Activated CD4-positive, alpha-beta T cell treated with anti-CD3 and anti-CD28 coated beads for 36 hours (primary cell): ENCODE measurements at regions of chr1 and their contacts with region 1.

Region 1: DNA sequence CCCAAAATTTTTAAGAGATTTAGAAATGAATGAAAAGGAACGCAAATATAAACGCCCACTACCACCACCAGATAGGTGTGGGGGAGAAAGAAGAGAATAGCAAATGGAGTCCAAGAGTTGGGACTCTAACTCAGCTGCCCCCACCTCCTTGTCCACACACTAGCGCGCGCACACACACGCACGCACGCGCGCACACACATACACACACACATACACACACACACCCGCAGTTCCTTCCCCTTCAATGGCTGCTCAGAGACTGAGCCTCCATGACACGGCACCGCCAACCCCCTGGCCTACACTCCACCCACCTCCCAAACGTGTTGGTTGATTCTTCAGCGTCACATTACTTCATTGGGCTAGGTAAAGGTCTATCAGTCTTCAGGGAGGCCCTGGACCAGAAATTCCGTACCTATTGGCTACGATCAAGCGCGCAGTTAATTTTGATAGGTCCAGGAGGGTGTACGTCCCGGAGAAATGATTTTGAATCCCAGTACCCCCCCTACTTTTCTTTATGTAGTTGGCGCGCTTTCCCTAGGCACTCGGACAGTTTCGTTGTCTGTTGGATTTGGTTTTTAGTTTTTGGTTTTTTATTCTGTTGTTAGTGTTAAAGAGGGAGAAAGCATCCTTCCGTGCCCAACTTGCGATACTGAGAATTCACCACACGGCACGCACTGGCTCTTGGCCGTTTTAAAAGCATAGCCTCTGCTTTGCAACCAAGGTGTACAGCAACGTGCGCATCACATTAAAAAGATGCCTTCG is at the start of gene ANP32E:
- DNase-seq: peak; percentile 96
- ATAC-seq: peak; percentile 91
- H3K4me3 Mint-ChIP-seq: no peak within 1 kb of the TSS
- H3K27ac Mint-ChIP-seq: peak within 1 kb of the TSS; percentile 99
- H3K4me1 Mint-ChIP-seq: peaks cover 14% of the 10 kb centered on the region
- H3K27me3 Mint-ChIP-seq: no peaks in the 10 kb centered on the region
- total RNA-seq, gene ANP32E: 176 to 212 TPM

Region 2: GRCh38 chr1:149917571-149918144 is 318.4 kb before region 1 on chr1 and contains the start of gene SV2A:
- CTCF ChIA-PET with region 1: no interaction called
- POLR2A ChIA-PET with region 1: no interaction called
- intact Hi-C with region 1: no loop called
- DNase-seq: peak; percentile 71
- ATAC-seq: peak; percentile 85
- H3K4me3 Mint-ChIP-seq: peak within 1 kb of the TSS; percentile 78
- H3K27ac Mint-ChIP-seq: no peak within 1 kb of the TSS
- H3K4me1 Mint-ChIP-seq: peaks cover 19% of the 10 kb centered on the region
- H3K27me3 Mint-ChIP-seq: peaks cover 2% of the 10 kb centered on the region
- total RNA-seq, gene SV2A: 7.8 to 8.5 TPM

Region 3: DNA sequence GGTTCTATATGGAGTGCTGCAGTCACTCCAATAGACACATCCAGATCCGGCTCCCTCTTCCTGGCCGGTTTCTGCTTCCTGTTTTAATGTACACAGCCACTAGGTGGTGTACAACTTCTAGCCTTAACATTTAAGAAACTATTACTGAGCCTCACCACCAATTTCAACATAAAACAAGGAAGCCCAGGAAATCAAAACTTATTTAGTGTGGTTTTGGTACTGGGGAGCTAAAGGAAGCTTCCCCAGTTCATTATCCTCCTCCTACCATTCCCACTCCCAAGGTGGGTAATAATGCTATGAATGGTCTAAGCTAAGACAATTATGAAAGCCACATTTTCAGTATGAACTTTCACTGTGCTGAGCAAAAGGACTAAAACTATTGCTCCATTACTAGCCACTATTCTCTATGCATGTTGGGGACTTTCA is 273.9 kb before region 1 on chr1:
- CTCF ChIA-PET with region 1: no interaction called
- POLR2A ChIA-PET with region 1: no interaction called
- intact Hi-C with region 1: no loop called
- DNase-seq: peak; percentile 52
- ATAC-seq: peak; percentile 71
- H3K4me3 Mint-ChIP-seq: no peak overlapping the region
- H3K27ac Mint-ChIP-seq: no peak overlapping the region
- H3K4me1 Mint-ChIP-seq: peaks cover 13% of the 10 kb centered on the region
- H3K27me3 Mint-ChIP-seq: no peaks in the 10 kb centered on the region

Region 4: DNA sequence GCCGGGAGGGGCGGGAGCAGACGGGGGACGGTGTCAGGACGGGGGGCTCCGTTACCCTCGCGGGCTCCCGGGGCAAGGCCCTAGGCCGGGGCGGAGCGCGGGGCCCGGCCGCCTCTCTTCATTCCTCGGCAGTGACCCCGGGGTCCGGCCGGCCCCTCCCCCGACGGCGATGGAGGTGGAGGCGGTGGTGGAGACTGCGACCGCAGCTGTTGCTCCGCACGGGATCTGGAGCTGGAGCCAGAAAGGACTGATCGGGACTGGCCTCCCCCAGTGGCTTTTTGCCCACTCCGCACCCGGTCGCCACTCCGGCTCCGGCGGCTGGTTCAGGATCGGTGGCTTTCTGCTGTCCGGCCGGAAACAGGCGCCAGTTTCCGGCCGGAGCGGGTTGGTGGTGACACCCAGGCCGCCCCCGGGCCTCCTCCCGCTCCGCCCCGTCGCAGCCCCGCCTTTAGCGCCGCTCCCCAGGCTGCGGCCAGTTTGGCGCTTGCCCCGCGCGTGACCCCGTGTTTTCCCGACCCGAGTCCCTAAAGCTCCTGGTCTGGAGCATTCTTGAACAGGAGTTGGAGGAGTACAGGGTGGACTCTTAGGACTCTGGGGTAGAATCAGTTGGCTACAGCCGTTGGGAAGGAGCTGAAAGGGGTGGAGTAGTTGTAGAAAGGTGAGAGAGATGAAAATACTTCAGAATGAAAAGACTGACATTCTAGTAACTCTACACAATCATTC is 225.5 kb before region 1 on chr1 and contains the start of gene OTUD7B:
- CTCF ChIA-PET with region 1: no interaction called
- POLR2A ChIA-PET with region 1: no interaction called
- intact Hi-C with region 1: loop called in 1 of 2 experiments (anchors 2 kb)
- DNase-seq: peak; percentile 88
- ATAC-seq: peak; percentile 62
- H3K4me3 Mint-ChIP-seq: peak within 1 kb of the TSS; percentile 99
- H3K27ac Mint-ChIP-seq: peak within 1 kb of the TSS; percentile 99
- H3K4me1 Mint-ChIP-seq: peaks cover 37% of the 10 kb centered on the region
- H3K27me3 Mint-ChIP-seq: no peaks in the 10 kb centered on the region
- total RNA-seq, gene OTUD7B: 18.5 to 20.1 TPM

Region 5: DNA sequence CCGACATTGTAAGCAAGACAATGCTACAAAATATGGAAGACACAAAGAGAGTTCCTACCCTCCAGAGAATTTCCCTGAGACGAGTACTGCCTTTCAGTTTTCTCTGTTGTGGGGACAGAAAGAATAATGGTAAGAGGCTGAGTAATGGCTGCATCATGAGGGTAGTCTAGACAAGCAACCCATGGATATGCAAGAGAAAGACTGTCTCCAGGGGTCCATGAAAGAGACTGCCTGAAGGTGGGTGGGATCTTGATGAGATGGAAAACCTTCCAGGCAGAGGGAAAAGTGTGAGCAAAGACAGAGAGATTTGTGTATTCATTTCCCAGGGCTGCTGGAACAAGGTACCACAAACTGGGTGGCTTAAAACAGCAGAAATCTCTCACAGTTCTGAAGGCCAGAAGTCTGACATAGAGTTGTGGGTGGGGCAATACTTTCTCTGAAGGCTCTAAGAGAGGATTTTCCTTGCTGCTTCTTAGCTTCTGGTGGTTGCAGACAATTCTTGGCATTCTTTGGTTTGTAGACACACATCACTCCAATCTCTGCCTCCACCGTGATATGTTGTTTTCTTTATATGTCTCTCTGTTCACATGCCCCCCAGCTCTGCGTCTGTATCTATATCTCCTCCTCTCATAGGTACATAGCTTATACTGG is 41.5 kb before region 1 on chr1:
- CTCF ChIA-PET with region 1: no interaction called
- POLR2A ChIA-PET with region 1: no interaction called
- intact Hi-C with region 1: no loop called
- DNase-seq: no peak
- ATAC-seq: no peak
- H3K4me3 Mint-ChIP-seq: no peak overlapping the region
- H3K27ac Mint-ChIP-seq: no peak overlapping the region
- H3K4me1 Mint-ChIP-seq: no peaks in the 10 kb centered on the region
- H3K27me3 Mint-ChIP-seq: peaks cover 3% of the 10 kb centered on the region

Region 6: GRCh38 chr1:150281837-150282653 is 46.0 kb after region 1 on chr1 and contains the start of gene CIART:
- CTCF ChIA-PET with region 1: no interaction called
- POLR2A ChIA-PET with region 1: no interaction called
- intact Hi-C with region 1: loop called (anchors 1 to 5 kb)
- DNase-seq: peak; percentile 89
- ATAC-seq: peak; percentile 96
- H3K4me3 Mint-ChIP-seq: peak within 1 kb of the TSS; percentile 77
- H3K27ac Mint-ChIP-seq: peak within 1 kb of the TSS; percentile 92
- H3K4me1 Mint-ChIP-seq: peaks cover 29% of the 10 kb centered on the region
- H3K27me3 Mint-ChIP-seq: no peaks in the 10 kb centered on the region
- total RNA-seq, gene CIART: 5.9 to 6.0 TPM

Region 7: GRCh38 chr1:150363426-150364230 is 127.6 kb after region 1 on chr1 and contains the start of gene RPRD2:
- CTCF ChIA-PET with region 1: interaction called, 4 read pairs
- POLR2A ChIA-PET with region 1: interaction called, 3 read pairs
- intact Hi-C with region 1: loop called (anchors 1 kb)
- DNase-seq: peak; percentile 99
- ATAC-seq: peak; percentile 95
- H3K4me3 Mint-ChIP-seq: peak within 1 kb of the TSS; percentile 91
- H3K27ac Mint-ChIP-seq: peak within 1 kb of the TSS; percentile 99
- H3K4me1 Mint-ChIP-seq: peaks cover 13% of the 10 kb centered on the region
- H3K27me3 Mint-ChIP-seq: no peaks in the 10 kb centered on the region
- total RNA-seq, gene RPRD2: 24.4 to 32.2 TPM

Region 8: GRCh38 chr1:150613061-150613920 is 377.3 kb after region 1 on chr1:
- CTCF ChIA-PET with region 1: no interaction called
- POLR2A ChIA-PET with region 1: no interaction called
- intact Hi-C with region 1: loop called (anchors 2 to 10 kb)
- DNase-seq: peak; percentile 78
- ATAC-seq: peak; percentile 63
- H3K4me3 Mint-ChIP-seq: peak overlapping the region; percentile 60
- H3K27ac Mint-ChIP-seq: peak overlapping the region; percentile 90
- H3K4me1 Mint-ChIP-seq: peaks cover 67% of the 10 kb centered on the region
- H3K27me3 Mint-ChIP-seq: no peaks in the 10 kb centered on the region